ENCODE measurements at regions of chr13 and their contacts with region 1.

Region 1: DNA sequence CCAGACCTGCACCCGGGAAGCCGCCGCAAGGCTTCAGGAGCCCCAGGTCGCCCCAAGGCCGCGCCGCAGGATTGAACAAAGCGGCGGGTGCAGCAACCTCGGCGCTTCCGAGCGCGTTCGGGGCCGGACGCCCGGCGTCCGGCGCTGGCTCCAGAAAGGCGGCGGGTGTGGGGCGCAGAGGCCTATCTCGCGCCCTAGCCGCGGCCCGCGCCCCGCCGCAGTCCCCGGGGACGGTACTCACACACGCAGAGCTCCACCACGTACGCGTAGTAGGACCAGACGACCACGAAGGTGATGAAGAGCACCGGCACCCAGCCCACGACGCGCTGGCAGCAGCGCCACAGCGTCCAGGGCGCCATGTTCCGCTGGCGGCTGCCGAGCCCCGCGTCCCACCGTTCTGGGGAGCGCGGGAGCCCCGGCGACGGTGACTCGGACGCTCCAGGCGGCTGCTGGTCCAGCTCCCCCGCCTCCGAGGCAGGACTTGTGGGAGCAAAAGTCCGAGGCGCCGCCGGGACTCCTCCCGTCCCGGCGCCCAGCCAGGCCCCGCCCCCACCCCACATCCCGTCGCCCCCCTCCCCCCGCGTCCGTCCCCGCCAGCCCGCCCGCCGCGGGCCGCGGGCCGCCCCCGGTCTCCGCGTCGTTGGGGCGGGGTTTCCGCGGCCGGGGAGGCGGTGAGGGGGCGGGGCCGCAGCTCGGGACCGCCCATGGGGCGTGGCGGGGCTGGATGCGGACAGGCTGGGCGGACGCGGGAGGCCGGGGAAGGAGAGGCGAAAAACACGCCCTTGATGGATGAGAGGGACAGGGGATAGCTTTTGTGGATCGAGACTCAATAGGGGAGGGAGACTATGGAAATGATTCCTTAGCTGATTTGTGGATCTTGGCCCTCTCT is at the start of gene ZDHHC20:
- DNase-seq: peak; percentile 72 to 80 (median 74)
- H3K4me3 ChIP-seq: peak within 1 kb of the TSS; percentile 85 to 96 (median 88)
- H3K4me3 Mint-ChIP-seq: peak within 1 kb of the TSS; percentile 93 to 95
- H3K27ac ChIP-seq: peak within 1 kb of the TSS; percentile 79 to 92
- H3K27ac Mint-ChIP-seq: peak within 1 kb of the TSS; percentile 88 to 96 (median 91)
- H3K4me1 ChIP-seq: peaks cover 22 to 40% of the 10 kb centered on the region in 2 donors
- H3K4me1 Mint-ChIP-seq: peaks cover 43% of the 10 kb centered on the region
- H3K27me3 ChIP-seq: no peaks in the 10 kb centered on the region
- H3K27me3 Mint-ChIP-seq: peaks cover 0 to 2% (median 0%) of the 10 kb centered on the region in 3 donors
- CTCF ChIP-seq: no peak
- polyA plus RNA-seq, gene ZDHHC20: 28.1 to 67.8 (median 66.8) TPM

Region 2: DNA sequence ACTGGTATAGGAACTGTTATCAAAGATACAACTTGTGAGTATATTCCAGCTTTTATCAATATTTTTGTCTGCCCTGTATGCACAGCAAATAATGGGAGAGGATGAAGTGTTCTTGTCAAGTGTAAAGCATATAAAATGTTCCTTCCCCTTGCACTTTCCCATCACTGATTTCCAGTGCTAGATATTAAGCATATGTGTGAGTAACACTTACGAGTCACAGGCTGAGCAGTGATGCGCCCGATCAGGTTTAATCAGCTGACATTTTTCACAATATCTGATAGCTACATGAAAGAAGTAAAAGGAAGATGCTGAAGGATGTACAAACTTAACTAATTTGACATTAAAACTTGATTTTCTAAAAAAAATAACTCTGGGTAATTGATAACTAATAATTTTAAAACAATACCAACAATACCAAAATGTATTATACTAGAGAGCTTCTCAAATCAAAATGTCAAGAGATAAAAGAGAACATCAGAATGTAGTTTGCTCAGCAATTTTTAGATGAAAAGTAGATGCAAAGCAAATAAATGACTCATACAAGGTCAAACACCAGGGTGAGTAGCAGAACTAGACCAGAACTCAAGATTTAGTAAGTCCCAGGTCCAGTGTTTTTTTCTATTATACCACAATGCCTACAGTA is 56.4 kb before region 1 on chr13:
- intact Hi-C with region 1: loop called (anchors 10 kb)
- DNase-seq: peak; percentile 5 to 45 (median 10)
- H3K4me3 ChIP-seq: no peak overlapping the region
- H3K4me3 Mint-ChIP-seq: no peak overlapping the region
- H3K27ac ChIP-seq: peak overlapping the region in 1 of 2 donors; percentile 20
- H3K27ac Mint-ChIP-seq: peak overlapping the region in 3 of 7 donors; percentile 28 to 42 (median 41)
- H3K4me1 ChIP-seq: no peaks in the 10 kb centered on the region
- H3K4me1 Mint-ChIP-seq: no peaks in the 10 kb centered on the region
- H3K27me3 ChIP-seq: no peaks in the 10 kb centered on the region
- H3K27me3 Mint-ChIP-seq: no peaks in the 10 kb centered on the region
- CTCF ChIP-seq: no peak

Region 3: GRCh38 chr13:21420706-21421105 is 38.4 kb before region 1 on chr13:
- intact Hi-C with region 1: loop called in 1 of 2 experiments (anchors 5 kb)
- DNase-seq: no peak
- H3K4me3 ChIP-seq: no peak overlapping the region
- H3K4me3 Mint-ChIP-seq: no peak overlapping the region
- H3K27ac ChIP-seq: no peak overlapping the region
- H3K27ac Mint-ChIP-seq: peak overlapping the region in 1 of 7 donors; percentile 17
- H3K4me1 ChIP-seq: no peaks in the 10 kb centered on the region
- H3K4me1 Mint-ChIP-seq: no peaks in the 10 kb centered on the region
- H3K27me3 ChIP-seq: no peaks in the 10 kb centered on the region
- H3K27me3 Mint-ChIP-seq: no peaks in the 10 kb centered on the region
- CTCF ChIP-seq: no peak

Region 4: DNA sequence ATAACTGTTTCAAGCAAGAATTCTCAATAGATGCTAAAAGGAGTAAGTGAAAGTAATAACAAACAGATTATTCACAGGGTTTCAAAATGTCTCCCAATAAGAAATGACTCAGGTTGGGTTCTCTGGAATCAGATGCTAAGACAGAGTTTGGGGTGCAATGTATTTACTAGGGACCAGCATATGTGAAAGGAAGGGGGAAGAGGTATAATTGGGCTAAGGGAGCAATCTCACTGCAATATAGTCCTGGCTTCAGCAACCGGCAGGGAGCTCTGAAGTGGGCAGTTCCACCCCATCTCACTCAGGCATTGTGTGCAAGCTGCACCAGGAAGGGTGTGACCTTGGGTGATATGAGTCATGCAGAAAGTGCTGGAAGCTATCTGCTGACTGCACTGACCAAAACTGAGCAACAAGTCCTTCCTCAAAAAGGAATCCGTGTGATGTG is 23.3 kb before region 1 on chr13:
- intact Hi-C with region 1: loop called in 1 of 2 experiments (anchors 2 kb)
- DNase-seq: peak; percentile 93 to 98 (median 96)
- H3K4me3 ChIP-seq: peak overlapping the region in 2 of 3 experiments; percentile 34 to 57
- H3K4me3 Mint-ChIP-seq: peak overlapping the region; percentile 64 to 81
- H3K27ac ChIP-seq: peak overlapping the region; percentile 86 to 96
- H3K27ac Mint-ChIP-seq: peak overlapping the region; percentile 93 to 99 (median 98)
- H3K4me1 ChIP-seq: peaks cover 42 to 69% of the 10 kb centered on the region in 2 donors
- H3K4me1 Mint-ChIP-seq: peaks cover 56% of the 10 kb centered on the region
- H3K27me3 ChIP-seq: no peaks in the 10 kb centered on the region
- H3K27me3 Mint-ChIP-seq: no peaks in the 10 kb centered on the region
- CTCF ChIP-seq: no peak